HepG2 (cell line): ENCODE measurements at regions of chr6 and their contacts with region 1.

Region 1: GRCh38 chr6:108782179-108783041 is 65.8 kb upstream of the ARMC2 start:
- DNase-seq: peak; percentile 40
- ATAC-seq: peak; percentile 91
- H3K4me3 ChIP-seq: peak overlapping the region; percentile 49 to 85 (median 73)
- H3K27ac ChIP-seq: no peak overlapping the region
- H3K4me1 ChIP-seq: peaks cover 63% of the 10 kb centered on the region
- H3K27me3 ChIP-seq: no peaks in the 10 kb centered on the region
- CTCF ChIP-seq: peak; percentile 96
- EP300 ChIP-seq: no peak
- POLR2A ChIP-seq: no peak
- RAD21 ChIP-seq: peak; percentile 86

Region 2: DNA sequence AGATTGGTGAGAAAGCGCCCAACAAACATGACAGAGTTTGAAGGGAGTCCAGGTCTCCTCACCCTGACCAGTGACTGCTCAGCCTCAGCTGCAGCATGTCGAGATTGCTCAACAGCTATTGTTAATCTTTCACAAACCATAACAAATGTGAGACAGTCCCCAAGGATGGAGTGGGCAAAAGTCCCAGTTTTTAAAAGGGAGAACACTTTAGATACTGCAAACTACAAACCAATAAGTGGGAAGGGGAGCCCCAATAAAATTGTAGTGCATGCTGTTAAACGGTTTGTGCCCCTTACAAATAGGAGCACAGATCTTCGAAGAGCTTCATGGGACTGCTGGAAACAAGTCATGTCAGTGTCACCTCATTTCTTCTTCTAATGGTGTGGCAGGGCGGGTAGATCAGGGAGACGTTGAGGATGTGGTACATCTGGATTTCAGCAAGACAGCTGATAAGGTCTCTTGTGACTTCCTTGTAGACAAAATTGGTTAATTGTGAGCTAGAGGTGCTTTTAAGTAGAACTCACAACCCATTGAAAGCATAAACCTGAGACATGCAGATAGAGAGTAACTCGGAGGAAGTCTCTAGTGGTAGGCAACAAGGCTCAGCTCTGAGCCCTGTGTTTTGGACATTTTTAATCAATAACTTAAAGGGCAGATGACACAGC is 68.2 kb before region 1 on chr6:
- CTCF ChIA-PET with region 1: interaction called, 5 read pairs
- POLR2A ChIA-PET with region 1: no interaction called
- in situ Hi-C with region 1: no loop called
- intact Hi-C with region 1: loop called (anchors 5 kb)
- DNase-seq: no peak
- ATAC-seq: peak; percentile 67
- H3K4me3 ChIP-seq: peak overlapping the region in 1 of 3 experiments; percentile 29; a peak in 2 of 6 replicates
- H3K27ac ChIP-seq: no peak overlapping the region
- H3K4me1 ChIP-seq: peaks cover 82% of the 10 kb centered on the region
- H3K27me3 ChIP-seq: peaks cover 0 to under 1% of the 10 kb centered on the region in 2 experiments; a peak in 1 of 5 replicates
- CTCF ChIP-seq: no peak
- EP300 ChIP-seq: no peak
- POLR2A ChIP-seq: no peak
- RAD21 ChIP-seq: no peak

Region 3: DNA sequence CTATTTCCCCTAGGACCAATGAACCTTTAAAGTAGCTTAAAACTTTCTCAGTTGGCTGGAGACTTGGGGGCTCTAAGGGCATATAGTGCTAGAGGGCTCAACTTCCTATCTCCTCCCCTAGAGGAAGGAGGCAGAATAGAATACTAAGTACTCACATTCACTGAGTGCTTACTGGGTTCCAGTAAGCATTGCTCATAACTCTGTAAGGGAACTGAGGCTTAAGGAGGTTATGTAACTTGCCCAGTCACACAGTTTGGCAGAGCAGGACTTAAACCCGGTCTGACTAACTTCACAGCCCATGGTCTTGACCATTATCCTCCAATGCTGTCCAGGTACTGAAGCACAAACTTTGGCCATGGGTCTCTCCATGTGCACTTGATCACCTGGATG is 299.8 kb after region 1 on chr6:
- CTCF ChIA-PET with region 1: no interaction called
- POLR2A ChIA-PET with region 1: no interaction called
- in situ Hi-C with region 1: no loop called
- intact Hi-C with region 1: no loop called
- DNase-seq: no peak
- ATAC-seq: peak; percentile 56; the same call in 2 of the 3 replicates
- H3K4me3 ChIP-seq: no peak overlapping the region
- H3K27ac ChIP-seq: no peak overlapping the region
- H3K4me1 ChIP-seq: peaks cover 13% of the 10 kb centered on the region
- H3K27me3 ChIP-seq: no peaks in the 10 kb centered on the region
- CTCF ChIP-seq: no peak
- EP300 ChIP-seq: no peak
- POLR2A ChIP-seq: no peak
- RAD21 ChIP-seq: no peak

Region 4: DNA sequence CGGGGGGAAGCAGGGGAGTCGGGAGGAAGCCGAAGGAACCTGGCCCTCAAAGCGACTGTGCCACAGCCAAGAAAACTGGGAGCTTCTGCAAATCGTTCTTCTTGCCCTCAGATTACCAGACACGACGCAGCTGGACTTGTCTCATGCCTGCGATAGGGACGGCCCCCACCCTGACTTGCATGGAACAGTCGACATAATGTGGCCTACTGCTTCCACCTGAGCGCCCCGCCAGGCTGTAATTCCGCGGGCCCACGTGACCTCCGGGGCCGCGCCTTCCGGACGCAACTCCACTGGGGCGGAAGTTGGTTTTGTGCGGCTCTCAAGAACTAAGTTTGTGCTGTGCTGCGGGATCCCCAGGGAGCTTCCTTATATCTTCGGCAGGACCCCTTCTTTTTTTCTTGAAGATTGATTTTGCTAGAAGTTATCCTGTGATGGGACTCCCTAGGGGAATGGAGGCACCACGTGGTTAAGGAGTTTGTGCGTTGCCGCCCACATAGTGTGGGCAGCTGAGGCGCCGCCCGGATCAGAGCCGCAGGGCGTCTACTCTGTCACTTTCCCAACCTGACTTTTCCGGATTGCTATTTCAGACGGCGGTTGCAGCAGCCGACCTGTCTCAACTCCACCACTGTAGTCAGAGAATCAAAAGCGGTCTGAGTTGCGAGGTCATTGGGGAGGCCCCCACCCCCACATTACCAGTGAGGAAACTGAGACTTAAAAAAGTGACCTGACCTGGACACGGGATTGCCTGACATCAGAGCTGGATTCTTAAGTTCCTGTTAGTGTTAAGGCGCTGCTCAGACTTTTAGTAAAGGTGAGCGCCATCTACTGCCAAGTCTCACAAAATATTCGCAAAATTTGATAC is 600.4 kb after region 1 on chr6:
- CTCF ChIA-PET with region 1: no interaction called
- POLR2A ChIA-PET with region 1: no interaction called
- in situ Hi-C with region 1: no loop called
- intact Hi-C with region 1: no loop called
- DNase-seq: peak; percentile 88
- ATAC-seq: peak; percentile 82
- H3K4me3 ChIP-seq: peak overlapping the region; percentile 95 to 99 (median 99)
- H3K27ac ChIP-seq: peak overlapping the region; percentile 98
- H3K4me1 ChIP-seq: peaks cover 36% of the 10 kb centered on the region
- H3K27me3 ChIP-seq: no peaks in the 10 kb centered on the region; a peak in 2 of 5 replicates
- CTCF ChIP-seq: peak; percentile 65
- EP300 ChIP-seq: peak in 1 of 2 experiments; percentile 20; a peak in 1 of 4 replicates
- POLR2A ChIP-seq: peak in 1 of 2 experiments; percentile 55; a peak in 2 of 4 replicates
- RAD21 ChIP-seq: peak; percentile 34; the same call in 1 of the 2 replicates